ENCODE measurements at regions of chr6 and their contacts with region 1.

Region 1: DNA sequence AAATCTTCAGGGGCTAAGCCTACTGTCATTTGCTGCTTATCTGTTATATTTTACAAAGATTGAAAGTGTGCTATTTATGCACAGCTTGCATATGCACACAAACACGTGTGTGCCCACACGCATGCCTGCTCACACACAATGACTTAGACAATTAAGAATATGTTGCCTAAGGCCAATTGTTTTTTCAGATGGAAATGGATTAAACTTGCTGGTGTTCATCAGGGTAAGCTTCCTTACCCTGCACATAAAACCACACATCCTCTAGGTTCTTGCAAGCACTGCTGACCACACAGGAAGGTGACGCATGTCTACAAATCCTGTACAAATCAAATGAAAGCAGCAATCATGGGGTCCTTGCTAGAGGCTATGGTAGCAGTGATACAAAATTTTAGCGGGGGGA is 58.4 kb downstream of the GJA10 start:
- DNase-seq: peak; percentile 53
- H3K4me3 Mint-ChIP-seq: peak overlapping the region; percentile 49
- H3K27ac Mint-ChIP-seq: peak overlapping the region; percentile 76
- H3K4me1 Mint-ChIP-seq: peaks cover 67% of the 10 kb centered on the region
- H3K27me3 Mint-ChIP-seq: no peaks in the 10 kb centered on the region

Region 2: DNA sequence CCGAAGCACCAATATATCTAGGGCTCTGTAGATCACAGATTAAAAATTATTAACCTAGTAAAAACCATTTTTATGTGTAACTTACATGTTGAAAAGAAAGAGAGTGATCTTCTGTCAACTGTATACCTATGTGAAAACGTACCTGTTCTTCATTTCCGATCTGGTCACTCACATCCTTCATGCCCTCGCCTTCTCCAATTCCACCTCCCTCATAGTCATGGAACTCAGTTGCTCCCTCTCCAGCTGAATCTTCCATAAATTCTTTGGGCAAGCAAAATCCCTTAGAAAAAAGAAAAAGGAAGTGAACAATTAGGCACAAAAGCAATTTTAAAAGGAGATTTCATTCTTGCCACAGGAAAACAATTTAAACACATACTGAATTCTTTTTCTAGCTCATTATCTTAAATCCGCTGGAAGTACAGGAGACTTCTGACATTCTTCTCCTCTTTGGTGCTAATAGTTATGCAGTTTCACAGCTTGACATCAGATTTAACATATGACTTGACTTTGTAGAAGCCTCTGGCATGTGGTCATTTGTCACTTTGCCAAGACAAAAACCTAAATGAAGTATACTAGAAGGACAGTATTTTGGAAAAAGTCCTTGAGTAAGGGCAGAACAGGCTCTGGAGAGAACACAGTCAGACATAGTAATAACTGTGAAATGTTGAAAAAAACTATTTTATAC is 284.7 kb before region 1 on chr6:
- intact Hi-C with region 1: no loop called
- DNase-seq: no peak
- H3K4me3 Mint-ChIP-seq: no peak overlapping the region
- H3K27ac Mint-ChIP-seq: no peak overlapping the region
- H3K4me1 Mint-ChIP-seq: no peaks in the 10 kb centered on the region
- H3K27me3 Mint-ChIP-seq: no peaks in the 10 kb centered on the region

Region 3: DNA sequence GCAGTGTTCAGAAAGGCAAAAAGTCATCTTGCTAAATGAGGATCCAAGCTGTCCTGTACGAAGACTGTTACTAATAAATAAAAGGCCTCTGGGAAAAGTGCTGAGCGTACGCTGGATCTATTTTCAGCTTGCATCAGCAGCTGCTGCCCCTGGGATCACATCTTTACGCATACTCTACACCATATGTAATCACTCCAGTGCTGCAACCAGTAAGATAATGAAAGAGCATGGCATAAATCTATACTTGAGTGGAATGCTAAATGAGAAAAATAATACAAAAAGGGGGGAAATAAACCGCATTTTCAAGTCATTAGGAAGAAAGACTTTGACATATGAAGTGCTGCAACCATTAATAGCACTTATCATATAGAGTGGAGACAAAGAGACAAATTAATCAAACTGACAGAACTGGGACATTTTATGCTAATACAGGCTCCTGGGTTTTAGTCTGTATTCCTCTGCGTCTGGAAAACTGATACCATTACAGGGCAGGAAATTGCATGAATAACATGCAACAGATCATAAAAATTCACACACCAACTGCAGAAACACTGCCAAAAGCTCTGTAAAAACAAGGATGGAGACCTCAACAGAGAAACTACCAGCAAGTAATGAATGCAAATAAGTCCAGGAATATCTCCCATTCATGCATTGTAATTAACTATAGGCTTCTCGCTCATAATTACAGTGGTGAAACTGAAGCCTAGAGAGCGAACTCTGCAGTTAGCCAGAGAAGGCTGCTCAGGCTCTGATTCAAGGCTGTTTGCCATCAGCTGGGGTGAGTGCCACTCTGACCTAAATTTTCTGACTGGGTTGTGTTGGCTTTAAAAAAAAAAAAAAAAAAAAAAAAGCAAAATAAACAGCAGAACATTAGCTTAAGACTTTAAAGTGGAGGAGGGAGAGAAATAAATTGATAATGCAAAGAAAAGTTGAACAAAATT is 25.4 kb after region 1 on chr6:
- intact Hi-C with region 1: loop called (anchors 1 kb)
- DNase-seq: no peak
- H3K4me3 Mint-ChIP-seq: no peak overlapping the region
- H3K27ac Mint-ChIP-seq: no peak overlapping the region
- H3K4me1 Mint-ChIP-seq: peaks cover 21% of the 10 kb centered on the region
- H3K27me3 Mint-ChIP-seq: no peaks in the 10 kb centered on the region

Region 4: GRCh38 chr6:90008908-90009501 is 56.3 kb after region 1 on chr6:
- intact Hi-C with region 1: loop called (anchors 2 kb)
- DNase-seq: no peak
- H3K4me3 Mint-ChIP-seq: no peak overlapping the region
- H3K27ac Mint-ChIP-seq: peak overlapping the region; percentile 62
- H3K4me1 Mint-ChIP-seq: peaks cover 30% of the 10 kb centered on the region
- H3K27me3 Mint-ChIP-seq: no peaks in the 10 kb centered on the region

Region 5: DNA sequence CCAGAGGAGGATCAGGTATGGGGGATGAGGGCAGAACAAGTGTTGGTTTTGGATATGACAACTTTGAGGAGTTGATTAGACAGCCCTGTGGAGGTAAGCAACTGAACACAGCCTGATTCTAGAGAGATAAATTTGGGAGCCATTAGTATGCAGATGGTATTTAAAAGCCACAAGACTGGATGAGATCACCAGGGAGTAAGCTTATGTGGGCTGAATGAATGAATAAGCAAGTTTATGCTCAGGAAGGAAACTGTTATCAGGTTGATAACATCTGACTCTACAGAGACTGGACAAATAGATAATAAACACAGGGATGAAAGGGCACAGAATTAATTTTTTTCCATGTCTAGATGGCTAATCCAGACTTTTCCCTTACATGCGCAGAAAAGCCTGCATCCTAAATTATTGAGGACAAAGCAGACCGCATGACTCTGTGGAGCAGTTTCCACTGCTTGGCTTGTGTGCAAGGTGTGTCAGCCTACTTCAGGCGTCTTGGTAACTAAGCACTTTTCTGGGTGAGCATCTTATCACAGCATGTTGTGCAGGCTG is 92.2 kb after region 1 on chr6:
- intact Hi-C with region 1: loop called (anchors 1 kb)
- DNase-seq: no peak
- H3K4me3 Mint-ChIP-seq: no peak overlapping the region
- H3K27ac Mint-ChIP-seq: no peak overlapping the region
- H3K4me1 Mint-ChIP-seq: peaks cover 34% of the 10 kb centered on the region
- H3K27me3 Mint-ChIP-seq: no peaks in the 10 kb centered on the region

Region 6: DNA sequence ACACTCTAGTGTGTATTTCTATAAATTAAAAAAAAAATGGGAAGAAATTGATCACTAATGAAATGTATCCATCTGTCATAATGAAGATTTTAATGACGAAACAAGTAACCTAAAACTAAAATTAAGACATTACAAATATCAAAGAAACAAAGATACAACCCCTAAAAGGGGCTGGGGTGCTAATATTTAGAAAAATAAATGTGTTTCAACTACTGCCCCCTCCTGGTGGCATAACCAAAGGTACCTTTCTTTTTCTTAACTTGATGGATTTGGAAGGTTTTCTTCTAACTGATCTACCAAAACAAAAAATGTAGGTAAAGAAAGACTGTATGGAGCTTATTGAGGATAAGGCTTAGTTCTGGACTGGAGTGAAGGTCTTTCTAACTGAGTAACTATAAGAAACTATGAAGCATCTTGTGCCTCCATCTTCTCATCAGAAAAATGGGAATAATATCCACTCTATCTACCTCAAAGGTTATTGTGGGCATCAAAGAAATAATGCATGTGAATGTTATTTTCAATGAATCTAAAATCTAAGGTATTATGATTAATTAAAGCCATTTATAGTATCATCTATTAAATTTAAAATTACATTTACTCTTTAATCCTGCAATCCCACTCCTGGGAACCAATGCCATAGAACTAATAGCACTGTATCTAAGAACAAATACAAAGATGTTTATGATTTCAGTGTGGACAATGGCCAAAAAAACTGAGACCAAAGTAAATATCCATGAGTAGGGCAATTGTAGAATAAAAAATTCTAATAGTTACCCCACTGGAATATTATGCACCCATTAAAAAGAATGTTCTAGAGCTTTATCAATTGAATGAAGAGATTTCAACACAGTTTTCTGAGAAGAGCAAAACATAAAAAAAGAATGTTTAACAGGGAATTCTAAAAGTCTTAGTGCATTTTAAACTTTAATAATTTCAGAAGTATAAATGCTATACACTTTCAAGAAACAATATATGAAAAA is 226.8 kb after region 1 on chr6:
- intact Hi-C with region 1: loop called (anchors 5 kb)
- DNase-seq: no peak
- H3K4me3 Mint-ChIP-seq: no peak overlapping the region
- H3K27ac Mint-ChIP-seq: no peak overlapping the region
- H3K4me1 Mint-ChIP-seq: peaks cover 67% of the 10 kb centered on the region
- H3K27me3 Mint-ChIP-seq: no peaks in the 10 kb centered on the region

Region 7: GRCh38 chr6:90393232-90393884 is 440.7 kb after region 1 on chr6:
- intact Hi-C with region 1: loop called (anchors 5 kb)
- DNase-seq: peak; percentile 71
- H3K4me3 Mint-ChIP-seq: no peak overlapping the region
- H3K27ac Mint-ChIP-seq: peak overlapping the region; percentile 64
- H3K4me1 Mint-ChIP-seq: peaks cover 74% of the 10 kb centered on the region
- H3K27me3 Mint-ChIP-seq: no peaks in the 10 kb centered on the region

Region 8: DNA sequence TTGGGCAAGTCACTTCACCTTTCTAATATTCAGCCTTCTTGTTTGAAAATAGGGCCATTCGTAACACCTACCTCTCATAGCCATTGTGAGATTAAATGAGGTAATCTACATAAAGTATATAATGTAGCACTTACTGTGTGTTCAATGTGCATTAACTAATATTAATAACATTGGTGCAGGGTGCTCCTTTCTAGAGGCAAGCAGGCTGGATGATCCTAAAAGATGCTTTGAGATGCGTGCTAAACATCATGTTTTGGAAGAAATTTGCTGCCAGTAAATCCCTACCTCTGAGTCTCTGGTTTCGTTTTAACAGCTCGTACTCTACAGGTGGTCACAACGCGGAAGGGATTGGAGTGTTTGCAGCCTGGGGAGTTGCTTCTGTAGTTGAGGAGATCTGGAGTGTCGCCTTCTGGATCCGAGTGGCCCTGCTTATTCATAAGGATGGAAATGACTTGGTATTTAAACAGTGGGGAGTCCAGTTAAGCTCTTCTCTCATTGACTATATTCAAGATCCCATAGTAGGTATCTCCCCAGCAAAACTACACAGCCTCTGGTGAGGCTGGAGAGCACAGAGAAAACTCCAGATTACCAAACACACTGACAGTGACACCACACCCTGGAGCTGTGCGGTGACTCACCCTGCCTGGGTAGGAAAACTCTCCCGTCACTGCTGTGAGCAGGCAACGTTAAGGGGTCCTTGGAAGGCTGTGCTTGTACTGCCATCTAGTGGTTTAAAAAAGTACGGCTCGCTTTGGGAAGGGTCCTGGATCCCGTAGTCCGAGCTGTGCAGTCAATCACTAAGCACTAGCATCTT is 526.3 kb after region 1 on chr6:
- intact Hi-C with region 1: loop called (anchors 2 kb)
- DNase-seq: peak; percentile 75
- H3K4me3 Mint-ChIP-seq: peak overlapping the region; percentile 17
- H3K27ac Mint-ChIP-seq: peak overlapping the region; percentile 67
- H3K4me1 Mint-ChIP-seq: peaks cover 58% of the 10 kb centered on the region
- H3K27me3 Mint-ChIP-seq: no peaks in the 10 kb centered on the region

Measured in activated T-helper 2 cell treated with anti-CD3 and anti-CD28 coated beads, Interferon-gamma antibody, Interleukin-2, Interleukin-4, amounts not matched to agents 10 μg/mL and 5 μg/mL and 100 μg/mL, durations not matched to agents 14 hours and 24 hours and 36 hours (primary cell).